Esophagus squamous epithelium (tissue), 5 donors: ENCODE measurements at regions of chr2 and their contacts with region 1.

Region 1: DNA sequence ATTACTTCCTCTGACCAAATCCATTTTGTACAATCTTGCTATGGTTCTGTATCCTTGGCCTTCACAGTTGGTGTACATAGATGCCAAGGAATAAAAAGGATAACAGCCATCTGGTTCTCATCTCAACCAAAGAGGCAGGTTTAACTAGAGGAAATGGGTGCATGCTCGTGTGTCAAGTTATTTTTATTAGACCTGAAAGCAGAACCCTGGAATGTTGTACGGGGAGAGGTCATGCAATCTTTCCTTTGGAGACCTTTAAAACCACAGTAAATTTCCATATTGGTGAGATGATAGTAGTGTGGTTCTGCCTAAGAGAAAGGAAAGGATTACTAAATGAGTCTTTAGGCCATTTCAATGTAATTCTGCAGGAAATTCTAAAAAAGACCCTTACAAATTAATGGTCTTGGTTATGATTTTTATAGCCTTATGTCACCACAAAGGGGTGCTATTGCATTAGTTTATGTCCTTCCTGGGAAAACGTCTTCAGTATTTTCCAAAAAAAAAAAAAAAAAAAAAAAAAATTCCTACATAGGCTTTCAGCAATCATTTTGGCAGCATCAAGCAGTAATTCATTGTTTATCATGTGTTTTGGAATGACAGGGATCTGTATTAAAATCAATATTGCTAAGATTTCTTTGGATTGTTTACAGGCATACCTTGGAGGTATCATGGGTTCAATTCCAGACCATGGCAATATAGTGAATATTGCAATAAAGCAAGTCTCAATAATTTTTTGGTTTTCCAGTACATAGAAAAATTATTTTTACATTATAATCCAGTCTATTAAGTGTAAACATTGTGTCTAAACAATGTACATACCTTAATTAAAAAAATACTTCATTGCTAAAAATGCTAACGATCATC is 270.8 kb downstream of the NYAP2 start:
- DNase-seq: no peak
- H3K4me3 ChIP-seq: no peak overlapping the region
- H3K27ac ChIP-seq: no peak overlapping the region
- H3K4me1 ChIP-seq: no peaks in the 10 kb centered on the region
- H3K27me3 ChIP-seq: peaks cover 0 to 5% (median 0%) of the 10 kb centered on the region in 4 donors
- CTCF ChIP-seq: peak in 4 of 6 experiments; percentile 24 to 54 (median 28)
- POLR2A ChIP-seq: no peak

Region 2: GRCh38 chr2:225282858-225283710 is 387.3 kb before region 1 on chr2:
- intact Hi-C with region 1: no loop called
- DNase-seq: no peak
- H3K4me3 ChIP-seq: no peak overlapping the region
- H3K27ac ChIP-seq: no peak overlapping the region
- H3K4me1 ChIP-seq: no peaks in the 10 kb centered on the region
- H3K27me3 ChIP-seq: no peaks in the 10 kb centered on the region
- CTCF ChIP-seq: peak in 5 of 6 experiments; percentile 20 to 62 (median 50)
- POLR2A ChIP-seq: no peak

Region 3: GRCh38 chr2:225735844-225736243 is 65.5 kb after region 1 on chr2:
- intact Hi-C with region 1: no loop called
- DNase-seq: no peak
- H3K4me3 ChIP-seq: no peak overlapping the region
- H3K27ac ChIP-seq: no peak overlapping the region
- H3K4me1 ChIP-seq: no peaks in the 10 kb centered on the region
- H3K27me3 ChIP-seq: no peaks in the 10 kb centered on the region
- CTCF ChIP-seq: no peak
- POLR2A ChIP-seq: no peak

Region 4: GRCh38 chr2:226984750-226985582 is 1314.6 kb after region 1 on chr2:
- intact Hi-C with region 1: loop called (anchors 5 kb)
- DNase-seq: no peak
- H3K4me3 ChIP-seq: no peak overlapping the region
- H3K27ac ChIP-seq: peak overlapping the region in 1 of 4 donors; percentile 19
- H3K4me1 ChIP-seq: peaks cover 0 to 14% (median 3%) of the 10 kb centered on the region in 3 donors
- H3K27me3 ChIP-seq: no peaks in the 10 kb centered on the region
- CTCF ChIP-seq: peak; percentile 50 to 75 (median 68)
- POLR2A ChIP-seq: no peak

Region 5: GRCh38 chr2:227106845-227107759 is 1436.8 kb after region 1 on chr2:
- intact Hi-C with region 1: loop called (anchors 10 kb)
- DNase-seq: no peak
- H3K4me3 ChIP-seq: no peak overlapping the region
- H3K27ac ChIP-seq: no peak overlapping the region
- H3K4me1 ChIP-seq: no peaks in the 10 kb centered on the region
- H3K27me3 ChIP-seq: no peaks in the 10 kb centered on the region
- CTCF ChIP-seq: peak in 5 of 6 experiments; percentile 16 to 60 (median 37)
- POLR2A ChIP-seq: no peak